ENCODE measurements at regions of chr14 and their contacts with region 1.

Region 1: GRCh38 chr14:104895786-104896661 is 28.7 kb upstream of the PLD4 start:
- DNase-seq: peak; percentile 28
- H3K4me3 ChIP-seq: no peak overlapping the region
- H3K27ac ChIP-seq: peak overlapping the region; percentile 10 to 17
- H3K4me1 ChIP-seq: no peaks in the 10 kb centered on the region
- H3K27me3 ChIP-seq: no peaks in the 10 kb centered on the region
- CTCF ChIP-seq: no peak
- POLR2A ChIP-seq: no peak

Region 2: GRCh38 chr14:105045710-105046326 is 149.8 kb after region 1 on chr14:
- intact Hi-C with region 1: loop called (anchors 2 kb)
- DNase-seq: peak; percentile 81
- H3K4me3 ChIP-seq: no peak overlapping the region
- H3K27ac ChIP-seq: no peak overlapping the region
- H3K4me1 ChIP-seq: no peaks in the 10 kb centered on the region
- H3K27me3 ChIP-seq: no peaks in the 10 kb centered on the region
- CTCF ChIP-seq: peak; percentile 98 to 100 (median 100)
- POLR2A ChIP-seq: no peak

Region 3: DNA sequence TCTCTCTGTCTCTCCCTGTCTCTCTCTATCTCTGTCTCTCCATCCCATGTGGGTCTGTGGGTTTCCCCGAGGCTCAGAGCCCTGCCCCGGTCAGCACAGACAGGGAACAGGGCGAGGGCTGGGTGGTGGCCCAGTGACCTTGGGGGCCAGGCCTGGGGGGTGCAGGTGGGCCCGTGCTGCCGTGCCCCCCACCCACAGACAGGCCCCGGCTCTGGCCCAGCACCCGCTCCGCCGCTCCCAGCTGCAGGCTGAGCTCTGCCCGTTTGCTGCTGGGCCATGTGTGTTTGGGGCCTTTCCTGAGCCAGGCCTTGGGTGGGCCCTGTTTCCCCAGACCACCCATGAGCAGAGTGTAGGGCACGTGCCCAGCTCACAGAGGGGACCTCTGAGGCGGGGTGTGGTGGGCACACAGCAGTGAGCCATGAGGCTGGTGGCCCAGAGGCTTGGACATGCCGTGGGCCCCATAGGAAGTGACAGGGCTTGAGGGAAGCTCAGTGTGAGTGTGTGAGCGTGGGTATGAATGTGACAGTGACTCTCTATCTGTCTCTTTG is 681.4 kb after region 1 on chr14:
- intact Hi-C with region 1: no loop called
- DNase-seq: no peak
- H3K4me3 ChIP-seq: no peak overlapping the region
- H3K27ac ChIP-seq: no peak overlapping the region
- H3K4me1 ChIP-seq: no peaks in the 10 kb centered on the region
- H3K27me3 ChIP-seq: no peaks in the 10 kb centered on the region
- CTCF ChIP-seq: no peak
- POLR2A ChIP-seq: no peak